ENCODE measurements at regions of chr9 and their contacts with region 1.

Region 1: GRCh38 chr9:131125128-131126058 is at the start of gene NUP214:
- DNase-seq: peak; percentile 97 to 100 (median 99)

Region 2: DNA sequence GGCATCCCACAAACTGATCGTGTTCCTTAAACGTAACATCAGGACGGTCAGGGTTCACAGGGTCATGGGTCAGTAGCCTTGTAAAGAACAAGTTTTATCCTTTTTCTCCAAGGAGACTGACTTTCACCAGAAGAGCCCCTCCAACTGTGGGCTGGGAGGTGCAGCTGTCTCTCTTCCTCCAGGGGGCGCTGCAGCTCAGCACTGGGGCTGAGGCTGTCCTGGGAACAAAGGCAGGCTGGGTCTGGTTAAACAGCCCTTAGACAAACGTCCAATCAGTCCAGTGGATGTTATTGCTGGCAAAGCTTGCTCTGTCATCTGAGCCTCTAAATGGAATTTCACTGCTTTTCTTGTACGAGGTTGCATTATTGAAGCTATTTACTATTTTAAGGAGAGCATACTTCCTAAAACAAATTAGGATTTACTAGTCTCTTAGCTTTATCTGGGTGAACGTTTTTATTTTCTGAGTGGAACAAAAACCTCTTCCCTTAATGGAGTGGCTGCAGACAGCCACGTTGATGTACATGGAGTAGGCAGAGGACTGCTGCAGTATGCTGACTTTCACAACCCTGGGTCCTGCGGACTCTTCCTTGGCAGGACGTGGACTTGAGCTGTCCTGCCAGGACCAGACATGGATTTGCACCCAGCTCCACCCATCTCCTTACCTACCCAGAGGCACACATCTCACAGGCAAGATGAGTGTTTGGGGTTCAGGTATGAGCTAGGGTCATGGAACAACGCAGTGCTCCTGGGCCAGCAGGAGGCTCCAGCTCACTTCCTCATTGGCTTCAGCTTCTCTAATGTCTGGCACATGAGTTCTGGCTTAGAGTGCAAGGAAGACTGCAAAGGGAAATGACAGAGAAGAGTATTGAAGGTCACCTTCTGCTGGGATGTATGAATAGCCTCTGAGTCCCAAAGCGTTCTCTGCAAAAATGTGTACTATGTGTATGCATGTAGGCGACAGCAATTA is 424.1 kb before region 1 on chr9:
- intact Hi-C with region 1: loop called (anchors 10 kb)
- DNase-seq: peak; percentile 42 to 92 (median 81)

Region 3: DNA sequence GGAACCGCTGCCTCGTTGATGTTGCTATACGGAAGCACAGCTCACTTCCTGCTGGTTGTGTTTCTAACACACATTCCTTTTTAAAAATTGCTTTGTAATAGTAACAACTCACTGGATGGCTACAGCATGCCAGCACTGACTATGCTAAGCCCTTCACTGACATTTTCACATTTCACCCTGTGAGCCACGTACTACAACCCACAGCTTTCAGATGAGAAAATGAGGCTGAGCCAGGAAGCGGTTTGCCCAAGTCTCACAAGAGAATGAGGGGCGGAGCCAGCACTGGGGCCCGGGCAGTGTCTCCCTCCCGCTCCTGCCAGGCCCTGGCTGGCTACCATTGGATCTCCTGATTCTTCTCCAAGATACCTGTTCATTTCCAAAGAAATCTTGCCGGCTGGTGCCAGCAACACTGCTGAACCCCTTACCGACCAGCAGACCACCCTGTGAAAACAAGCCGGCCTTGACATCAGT is 112.6 kb after region 1 on chr9:
- intact Hi-C with region 1: no loop called
- DNase-seq: peak in 41 of 42 donors; percentile 15 to 75 (median 51)

Region 4: GRCh38 chr9:131393622-131394463 is 268.4 kb after region 1 on chr9 and contains the start of gene PRRC2B:
- intact Hi-C with region 1: no loop called
- DNase-seq: peak in 40 of 42 donors; percentile 66 to 93 (median 85)

Measured in head of caudate nucleus (tissue), 42 donors.